ENCODE measurements at regions of chr5 and their contacts with region 1.

Region 1: GRCh38 chr5:134394932-134395331 is 16.7 kb downstream of the CDKN2AIPNL start:
- DNase-seq: no peak
- H3K4me3 ChIP-seq: no peak overlapping the region
- H3K27ac ChIP-seq: no peak overlapping the region
- H3K4me1 ChIP-seq: no peaks in the 10 kb centered on the region
- H3K27me3 ChIP-seq: no peaks in the 10 kb centered on the region
- CTCF ChIP-seq: no peak
- EP300 ChIP-seq: no peak
- POLR2A ChIP-seq: no peak
- RAD21 ChIP-seq: no peak

Region 2: GRCh38 chr5:133977161-133977787 is 417.7 kb before region 1 on chr5:
- CTCF ChIA-PET with region 1: no interaction called
- POLR2A ChIA-PET with region 1: no interaction called
- DNase-seq: no peak
- H3K4me3 ChIP-seq: no peak overlapping the region
- H3K27ac ChIP-seq: no peak overlapping the region
- H3K4me1 ChIP-seq: no peaks in the 10 kb centered on the region
- H3K27me3 ChIP-seq: no peaks in the 10 kb centered on the region
- CTCF ChIP-seq: no peak
- EP300 ChIP-seq: no peak
- POLR2A ChIP-seq: no peak
- RAD21 ChIP-seq: no peak

Region 3: GRCh38 chr5:134328619-134329018 is 66.3 kb before region 1 on chr5:
- CTCF ChIA-PET with region 1: no interaction called
- POLR2A ChIA-PET with region 1: no interaction called
- DNase-seq: no peak
- H3K4me3 ChIP-seq: no peak overlapping the region
- H3K27ac ChIP-seq: no peak overlapping the region
- H3K4me1 ChIP-seq: no peaks in the 10 kb centered on the region
- H3K27me3 ChIP-seq: no peaks in the 10 kb centered on the region
- CTCF ChIP-seq: no peak
- EP300 ChIP-seq: no peak
- POLR2A ChIP-seq: no peak
- RAD21 ChIP-seq: no peak

Region 4: GRCh38 chr5:134345996-134346395 is 48.9 kb before region 1 on chr5:
- CTCF ChIA-PET with region 1: no interaction called
- POLR2A ChIA-PET with region 1: no interaction called
- DNase-seq: no peak
- H3K4me3 ChIP-seq: peak overlapping the region in 1 of 4 experiments; percentile 15; a peak in 1 of 8 replicates
- H3K27ac ChIP-seq: peak overlapping the region; percentile 43
- H3K4me1 ChIP-seq: peaks cover 0 to 6% (median 3%) of the 10 kb centered on the region in 4 experiments; a peak in 3 of 7 replicates
- H3K27me3 ChIP-seq: no peaks in the 10 kb centered on the region
- CTCF ChIP-seq: no peak
- EP300 ChIP-seq: no peak
- POLR2A ChIP-seq: no peak
- RAD21 ChIP-seq: no peak

Region 5: DNA sequence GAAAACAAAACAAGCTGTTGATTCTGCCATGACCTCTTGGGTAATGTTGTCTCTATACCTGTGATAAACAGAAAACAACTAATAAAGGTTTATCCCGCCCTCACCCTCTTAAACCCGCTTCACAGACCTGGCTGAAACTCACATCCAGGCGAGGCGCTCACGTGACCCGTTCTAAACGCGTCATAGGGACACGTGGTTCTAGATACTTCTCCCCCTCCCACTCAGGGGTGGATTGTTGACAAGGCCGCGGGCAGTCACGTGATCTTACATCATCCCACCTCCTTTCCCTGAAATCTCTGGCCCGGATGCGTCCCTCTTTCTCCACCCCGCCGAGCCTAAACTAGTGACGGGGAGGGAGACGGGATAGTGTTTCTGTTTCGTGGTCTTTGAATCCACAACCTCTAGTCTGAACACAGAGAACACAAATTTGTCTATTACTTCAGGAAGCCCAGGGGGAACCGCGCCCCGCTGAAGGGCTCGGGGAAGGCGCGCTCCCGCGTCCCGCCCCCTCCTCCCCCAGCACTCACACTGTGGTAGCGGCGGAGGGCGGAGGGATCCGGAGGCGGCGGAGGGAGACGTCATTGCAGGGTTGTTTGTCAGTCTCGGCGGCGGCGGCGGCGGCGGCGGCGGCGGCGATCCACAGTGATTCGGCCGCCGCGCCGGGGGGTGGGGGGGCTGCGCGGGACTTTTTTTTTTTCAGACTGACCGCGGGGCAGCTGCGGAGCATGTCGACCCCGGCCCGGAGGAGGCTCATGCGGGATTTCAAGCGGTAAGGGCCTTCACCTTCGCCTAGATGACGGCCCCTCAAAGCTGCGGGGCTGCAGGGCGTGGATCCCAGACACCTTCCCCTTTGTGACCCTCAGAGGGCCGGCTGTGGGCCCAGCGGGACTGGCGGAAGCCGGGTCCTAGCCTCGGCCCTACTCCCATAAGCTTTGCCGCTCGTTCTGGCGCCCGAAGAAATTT is 23.8 kb before region 1 on chr5 and contains the start of gene UBE2B:
- CTCF ChIA-PET with region 1: interaction called, 6 read pairs
- POLR2A ChIA-PET with region 1: interaction called, 12 read pairs
- DNase-seq: peak; percentile 92 to 97
- H3K4me3 ChIP-seq: peak within 1 kb of the TSS; percentile 83 to 97 (median 91)
- H3K27ac ChIP-seq: peak within 1 kb of the TSS; percentile 98
- H3K4me1 ChIP-seq: no peaks in the 10 kb centered on the region; a peak in 3 of 7 replicates
- H3K27me3 ChIP-seq: no peaks in the 10 kb centered on the region
- CTCF ChIP-seq: no peak
- EP300 ChIP-seq: peak in 1 of 2 experiments; percentile 99; a peak in 2 of 3 replicates
- POLR2A ChIP-seq: peak; percentile 24 to 68
- RAD21 ChIP-seq: no peak
- total RNA-seq, gene UBE2B: 40.3 and 46.8 TPM in 2 replicates

Region 6: DNA sequence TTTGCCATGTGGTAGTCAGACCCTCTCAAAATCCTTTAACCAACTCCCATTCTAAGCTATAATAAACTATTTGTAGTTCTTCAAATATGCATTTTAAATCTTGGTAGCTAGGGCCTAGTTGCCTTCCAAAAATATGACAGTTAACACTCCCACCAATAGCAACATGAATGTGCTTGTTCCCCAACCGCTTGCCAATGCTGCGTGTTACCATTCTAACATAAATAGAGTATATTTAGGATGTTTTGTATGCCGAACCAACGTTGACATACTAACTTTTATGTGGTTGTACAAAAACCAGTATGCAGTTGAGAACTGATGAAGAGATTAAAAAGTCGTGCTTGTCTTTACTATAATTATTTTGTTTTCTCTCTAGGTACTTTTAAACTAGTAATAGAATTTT is 14.6 kb before region 1 on chr5:
- CTCF ChIA-PET with region 1: interaction called, 24 read pairs
- POLR2A ChIA-PET with region 1: interaction called, 51 read pairs
- DNase-seq: no peak
- H3K4me3 ChIP-seq: no peak overlapping the region
- H3K27ac ChIP-seq: no peak overlapping the region
- H3K4me1 ChIP-seq: no peaks in the 10 kb centered on the region
- H3K27me3 ChIP-seq: no peaks in the 10 kb centered on the region
- CTCF ChIP-seq: no peak
- EP300 ChIP-seq: no peak
- POLR2A ChIP-seq: no peak
- RAD21 ChIP-seq: no peak

Region 7: DNA sequence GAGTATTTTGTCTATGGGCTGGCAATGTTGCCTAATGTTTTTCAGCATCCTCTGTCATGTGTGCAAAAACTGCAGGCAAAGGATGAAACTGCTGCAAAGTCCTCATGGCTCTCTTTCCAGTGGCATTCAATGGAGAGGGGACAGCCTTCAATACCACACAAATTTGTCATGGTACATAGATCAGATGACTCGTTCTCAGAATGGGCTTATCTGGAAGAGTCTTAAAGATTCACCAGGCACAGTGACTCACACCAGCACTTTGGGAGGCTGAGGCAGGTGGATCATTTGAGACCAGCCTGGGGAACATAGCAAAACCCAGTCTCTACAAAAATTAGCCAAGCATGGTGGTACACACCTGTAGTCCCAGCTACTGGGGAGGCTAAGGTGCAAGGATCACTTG is 11.5 kb after region 1 on chr5:
- CTCF ChIA-PET with region 1: interaction called, 21 read pairs
- POLR2A ChIA-PET with region 1: interaction called, 15 read pairs
- DNase-seq: no peak
- H3K4me3 ChIP-seq: no peak overlapping the region
- H3K27ac ChIP-seq: no peak overlapping the region
- H3K4me1 ChIP-seq: peaks cover 0 to 5% (median 3%) of the 10 kb centered on the region in 4 experiments; a peak in 3 of 7 replicates
- H3K27me3 ChIP-seq: no peaks in the 10 kb centered on the region
- CTCF ChIP-seq: no peak
- EP300 ChIP-seq: no peak
- POLR2A ChIP-seq: no peak
- RAD21 ChIP-seq: no peak

Region 8: DNA sequence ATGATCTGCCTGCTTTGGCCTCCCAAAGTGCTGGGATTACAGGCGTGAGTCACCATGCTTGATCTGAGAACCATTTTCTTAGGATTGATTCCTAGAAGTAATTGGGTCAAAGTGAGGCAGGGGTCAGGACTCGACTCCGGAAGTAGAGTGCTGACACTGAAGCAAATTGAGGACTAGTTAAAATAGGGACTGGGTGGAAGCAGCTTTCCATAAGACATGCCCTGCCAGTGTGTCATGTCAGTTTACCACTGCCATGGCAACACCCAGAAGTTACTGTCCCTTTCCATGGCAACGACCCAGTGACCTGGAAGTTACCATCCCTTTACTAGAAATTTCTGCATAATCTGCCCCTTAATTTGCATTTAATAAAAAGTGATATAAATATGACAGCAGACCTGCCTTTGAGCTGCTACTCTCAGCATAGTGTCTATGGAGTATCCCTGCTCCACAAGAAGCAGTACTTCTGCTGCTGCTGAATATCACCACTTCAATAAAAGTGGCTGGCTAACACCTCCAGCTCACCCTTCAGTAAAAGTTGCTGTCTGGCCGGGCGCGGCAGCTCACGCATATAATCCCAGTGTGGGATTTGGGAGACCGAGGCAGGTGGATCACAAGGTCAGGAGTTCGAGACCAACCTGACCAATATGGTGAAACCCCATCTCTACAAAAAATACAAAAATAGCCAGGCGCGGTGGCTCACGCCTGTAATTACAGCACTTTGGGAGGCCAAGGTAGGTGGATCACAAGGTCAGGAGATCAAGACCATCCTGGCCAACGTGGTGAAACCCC is 82.7 kb after region 1 on chr5:
- CTCF ChIA-PET with region 1: no interaction called
- POLR2A ChIA-PET with region 1: no interaction called
- DNase-seq: no peak
- H3K4me3 ChIP-seq: no peak overlapping the region
- H3K27ac ChIP-seq: no peak overlapping the region
- H3K4me1 ChIP-seq: no peaks in the 10 kb centered on the region
- H3K27me3 ChIP-seq: no peaks in the 10 kb centered on the region
- CTCF ChIP-seq: no peak
- EP300 ChIP-seq: no peak
- POLR2A ChIP-seq: no peak
- RAD21 ChIP-seq: no peak